CD8-positive, alpha-beta T cell (primary cell): ENCODE measurements at regions of chr2 and their contacts with region 1.

Region 1: GRCh38 chr2:27890146-27890923 is at the starts of genes BABAM2 and RBKS:
- DNase-seq: peak; percentile 86 to 97 (median 93)
- ATAC-seq: peak; percentile 79
- H3K4me3 ChIP-seq: peak within 1 kb of the TSS; percentile 77 to 95
- H3K4me3 Mint-ChIP-seq: peak within 1 kb of the TSS; percentile 94
- H3K27ac ChIP-seq: peak within 1 kb of the TSS; percentile 98 to 100
- H3K27ac Mint-ChIP-seq: peak within 1 kb of the TSS; percentile 100
- H3K4me1 ChIP-seq: peaks cover 22% of the 10 kb centered on the region
- H3K4me1 Mint-ChIP-seq: peaks cover 58% of the 10 kb centered on the region
- H3K27me3 ChIP-seq: no peaks in the 10 kb centered on the region
- H3K27me3 Mint-ChIP-seq: peaks cover 2% of the 10 kb centered on the region
- CTCF ChIP-seq: no peak
- total RNA-seq, gene BABAM2: 26.3 to 33.1 TPM
- total RNA-seq, gene RBKS: 5.9 to 6.3 TPM

Region 2: GRCh38 chr2:27281855-27282559 is 608.3 kb before region 1 on chr2 and contains the start of gene TRIM54:
- CTCF ChIA-PET with region 1: no interaction called
- POLR2A ChIA-PET with region 1: no interaction called
- intact Hi-C with region 1: no loop called
- DNase-seq: no peak
- ATAC-seq: no peak
- H3K4me3 ChIP-seq: no peak within 1 kb of the TSS
- H3K4me3 Mint-ChIP-seq: no peak within 1 kb of the TSS
- H3K27ac ChIP-seq: no peak within 1 kb of the TSS
- H3K27ac Mint-ChIP-seq: no peak within 1 kb of the TSS
- H3K4me1 ChIP-seq: no peaks in the 10 kb centered on the region
- H3K4me1 Mint-ChIP-seq: no peaks in the 10 kb centered on the region
- H3K27me3 ChIP-seq: no peaks in the 10 kb centered on the region
- H3K27me3 Mint-ChIP-seq: peaks cover 25% of the 10 kb centered on the region
- CTCF ChIP-seq: no peak
- total RNA-seq, gene TRIM54: not detected

Region 3: DNA sequence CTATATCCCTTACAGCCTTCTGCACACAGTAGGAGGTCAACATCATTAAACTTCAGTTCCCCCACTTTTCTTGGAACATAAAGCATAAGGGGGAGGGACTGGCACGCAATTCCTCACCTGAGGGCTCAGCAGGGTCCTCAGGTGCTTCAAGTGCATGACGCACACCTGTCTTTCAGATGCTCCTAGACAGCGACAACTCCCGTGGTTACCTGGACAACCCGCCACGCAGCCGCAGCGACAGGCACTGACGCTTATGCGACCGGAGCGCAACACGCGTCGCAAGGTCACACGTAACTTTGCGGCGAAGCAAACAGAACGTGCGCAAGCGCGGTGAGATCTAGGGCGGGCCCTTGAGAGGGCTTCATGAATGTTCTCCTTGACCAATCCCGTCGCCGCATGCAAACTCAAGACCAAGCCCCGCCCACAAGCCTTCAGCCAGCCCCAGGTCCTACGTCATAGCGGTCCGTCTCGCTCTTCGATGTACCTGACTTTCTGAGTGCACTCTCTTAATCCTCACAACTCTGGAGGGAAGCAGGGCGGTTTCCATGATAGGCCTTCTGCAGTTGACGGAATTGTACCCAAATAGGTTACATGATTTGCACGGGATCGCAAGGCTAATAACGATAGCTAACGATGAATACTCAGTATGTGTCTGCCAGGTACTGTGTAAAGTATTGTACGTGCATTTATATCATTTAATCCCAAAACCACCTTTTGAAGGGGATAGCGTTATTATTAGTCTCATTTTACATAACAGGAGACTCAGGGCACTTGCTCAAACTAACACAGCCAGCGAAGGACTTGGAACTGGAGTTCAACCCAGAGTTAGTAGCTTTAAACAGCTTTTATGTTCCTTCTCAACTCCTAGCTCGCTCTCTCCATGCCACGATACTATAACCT is 400.6 kb before region 1 on chr2 and contains the start of gene IFT172:
- CTCF ChIA-PET with region 1: no interaction called
- POLR2A ChIA-PET with region 1: no interaction called
- intact Hi-C with region 1: loop called in 1 of 2 experiments (anchors 5 kb)
- DNase-seq: peak; percentile 98 to 100 (median 99)
- ATAC-seq: peak; percentile 91
- H3K4me3 ChIP-seq: peak within 1 kb of the TSS; percentile 53 to 57
- H3K4me3 Mint-ChIP-seq: peak within 1 kb of the TSS; percentile 82
- H3K27ac ChIP-seq: peak within 1 kb of the TSS; percentile 85 to 90
- H3K27ac Mint-ChIP-seq: peak within 1 kb of the TSS; percentile 94
- H3K4me1 ChIP-seq: peaks cover 20% of the 10 kb centered on the region
- H3K4me1 Mint-ChIP-seq: peaks cover 21% of the 10 kb centered on the region
- H3K27me3 ChIP-seq: peaks cover 7 to 10% of the 10 kb centered on the region in 2 experiments
- H3K27me3 Mint-ChIP-seq: peaks cover 13% of the 10 kb centered on the region
- CTCF ChIP-seq: no peak
- total RNA-seq, gene IFT172: 15.0 to 17.2 TPM

Region 4: DNA sequence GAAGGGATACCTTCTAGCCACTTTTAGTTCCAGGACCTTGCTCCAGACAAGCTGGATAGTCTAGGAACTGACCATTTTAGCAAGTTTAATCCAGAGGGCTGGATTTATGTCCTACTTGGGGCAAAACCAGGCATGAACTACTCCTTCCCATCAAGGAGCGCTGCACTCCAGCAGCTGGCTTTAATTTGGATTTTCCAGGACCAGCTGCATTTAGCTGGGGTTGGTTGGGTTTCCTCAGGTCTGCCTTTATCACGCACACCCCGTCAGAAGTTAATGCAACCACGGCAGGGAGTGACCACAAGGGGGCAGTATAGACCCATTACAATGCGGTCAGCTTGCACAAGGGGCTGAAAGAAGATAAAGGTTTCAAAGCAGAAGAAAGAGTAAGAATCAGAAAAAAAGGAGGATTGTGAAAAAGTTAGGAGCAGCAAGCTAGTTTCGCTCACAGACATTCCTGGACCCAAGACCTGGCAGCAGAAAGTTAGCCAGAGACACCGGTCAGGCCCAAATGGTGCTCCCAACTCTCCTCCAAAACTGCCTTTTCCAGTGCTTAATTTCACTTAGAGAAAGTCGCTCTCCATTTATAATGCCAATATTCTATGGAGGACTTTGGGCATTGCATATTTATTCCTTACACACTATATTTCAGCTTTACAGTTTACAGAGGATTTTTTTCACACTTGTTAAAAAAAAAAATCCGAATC is 186.5 kb before region 1 on chr2:
- CTCF ChIA-PET with region 1: interaction called, 3 read pairs
- POLR2A ChIA-PET with region 1: interaction called, 3 read pairs
- intact Hi-C with region 1: loop called in 1 of 2 experiments (anchors 10 kb)
- DNase-seq: peak; percentile 73 to 90 (median 84)
- ATAC-seq: peak; percentile 84
- H3K4me3 ChIP-seq: no peak overlapping the region
- H3K4me3 Mint-ChIP-seq: no peak overlapping the region
- H3K27ac ChIP-seq: no peak overlapping the region
- H3K27ac Mint-ChIP-seq: no peak overlapping the region
- H3K4me1 ChIP-seq: no peaks in the 10 kb centered on the region
- H3K4me1 Mint-ChIP-seq: peaks cover 3% of the 10 kb centered on the region
- H3K27me3 ChIP-seq: no peaks in the 10 kb centered on the region
- H3K27me3 Mint-ChIP-seq: no peaks in the 10 kb centered on the region
- CTCF ChIP-seq: peak; percentile 84

Region 5: DNA sequence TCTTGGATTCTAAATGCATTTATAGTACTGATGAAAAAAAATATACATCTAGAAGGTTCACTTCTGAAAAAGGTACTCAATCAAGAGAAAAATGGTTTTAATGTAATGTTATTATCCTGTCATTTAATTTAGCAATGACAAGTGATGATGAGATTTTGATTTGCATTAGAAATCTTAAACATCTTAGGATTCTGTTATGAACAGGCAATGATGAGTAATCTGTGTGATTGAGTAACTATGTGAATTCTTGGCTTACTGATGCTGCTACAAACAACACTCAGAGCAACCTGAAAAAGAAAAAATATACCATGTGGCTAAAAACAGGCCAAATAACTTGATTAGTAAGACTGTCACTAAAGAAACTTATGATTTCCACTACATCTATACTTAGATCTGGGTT is 30.2 kb before region 1 on chr2:
- CTCF ChIA-PET with region 1: no interaction called
- POLR2A ChIA-PET with region 1: no interaction called
- intact Hi-C with region 1: no loop called
- DNase-seq: no peak
- ATAC-seq: no peak
- H3K4me3 ChIP-seq: no peak overlapping the region
- H3K4me3 Mint-ChIP-seq: no peak overlapping the region
- H3K27ac ChIP-seq: no peak overlapping the region
- H3K27ac Mint-ChIP-seq: no peak overlapping the region
- H3K4me1 ChIP-seq: no peaks in the 10 kb centered on the region
- H3K4me1 Mint-ChIP-seq: no peaks in the 10 kb centered on the region
- H3K27me3 ChIP-seq: no peaks in the 10 kb centered on the region
- H3K27me3 Mint-ChIP-seq: peaks cover under 1% of the 10 kb centered on the region
- CTCF ChIP-seq: no peak

Region 6: GRCh38 chr2:27960237-27960912 is 70.0 kb after region 1 on chr2:
- CTCF ChIA-PET with region 1: no interaction called
- POLR2A ChIA-PET with region 1: interaction called, 3 read pairs
- intact Hi-C with region 1: loop called in 1 of 2 experiments (anchors 5 kb)
- DNase-seq: peak in 3 of 9 experiments; percentile 22 to 59 (median 31)
- ATAC-seq: peak; percentile 85
- H3K4me3 ChIP-seq: no peak overlapping the region
- H3K4me3 Mint-ChIP-seq: peak overlapping the region; percentile 37
- H3K27ac ChIP-seq: no peak overlapping the region
- H3K27ac Mint-ChIP-seq: peak overlapping the region; percentile 33
- H3K4me1 ChIP-seq: peaks cover 27% of the 10 kb centered on the region
- H3K4me1 Mint-ChIP-seq: peaks cover 57% of the 10 kb centered on the region
- H3K27me3 ChIP-seq: no peaks in the 10 kb centered on the region
- H3K27me3 Mint-ChIP-seq: no peaks in the 10 kb centered on the region
- CTCF ChIP-seq: no peak

Region 7: GRCh38 chr2:28406276-28407096 is 516.2 kb after region 1 on chr2:
- CTCF ChIA-PET with region 1: no interaction called
- POLR2A ChIA-PET with region 1: no interaction called
- intact Hi-C with region 1: loop called (anchors 1 to 5 kb)
- DNase-seq: peak; percentile 47 to 93 (median 76)
- ATAC-seq: peak; percentile 60
- H3K4me3 ChIP-seq: no peak overlapping the region
- H3K4me3 Mint-ChIP-seq: peak overlapping the region; percentile 44
- H3K27ac ChIP-seq: peak overlapping the region; percentile 28 to 96
- H3K27ac Mint-ChIP-seq: peak overlapping the region; percentile 91
- H3K4me1 ChIP-seq: peaks cover 75% of the 10 kb centered on the region
- H3K4me1 Mint-ChIP-seq: peaks cover 76% of the 10 kb centered on the region
- H3K27me3 ChIP-seq: no peaks in the 10 kb centered on the region
- H3K27me3 Mint-ChIP-seq: no peaks in the 10 kb centered on the region
- CTCF ChIP-seq: no peak

Region 8: DNA sequence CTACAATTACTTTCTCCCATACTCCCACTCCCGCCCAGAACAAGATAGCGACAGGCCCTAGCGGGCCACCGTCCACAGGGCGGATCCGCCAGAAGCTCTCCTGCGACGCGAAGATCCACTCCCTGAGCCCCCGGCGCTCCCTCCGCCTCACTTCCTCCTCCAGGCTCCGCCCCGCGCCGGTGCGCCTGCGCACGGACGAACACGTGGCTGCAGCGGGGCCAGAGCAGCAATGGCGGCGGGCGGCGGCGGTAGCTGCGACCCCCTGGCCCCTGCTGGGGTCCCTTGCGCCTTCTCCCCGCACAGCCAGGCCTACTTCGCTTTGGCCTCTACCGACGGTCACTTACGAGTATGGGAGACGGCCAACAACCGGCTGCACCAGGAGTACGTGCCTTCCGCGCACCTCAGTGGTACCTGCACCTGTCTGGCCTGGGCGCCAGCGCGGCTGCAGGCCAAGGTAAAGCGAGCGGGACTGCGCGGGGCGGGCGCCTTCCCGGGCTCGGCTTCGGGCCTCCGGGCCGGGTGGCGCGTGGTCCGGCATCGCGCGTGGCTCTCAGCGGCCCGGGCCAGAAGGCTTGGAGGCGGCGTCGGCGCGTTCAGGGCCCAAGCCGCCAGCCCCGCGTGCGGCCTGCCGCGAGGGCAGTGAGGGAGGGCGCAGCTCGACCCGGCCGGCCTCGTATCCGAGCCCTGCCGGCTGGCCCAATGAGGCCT is 1004.3 kb after region 1 on chr2 and contains the start of gene WDR43:
- CTCF ChIA-PET with region 1: interaction called, 3 read pairs
- POLR2A ChIA-PET with region 1: no interaction called
- intact Hi-C with region 1: loop called in 1 of 2 experiments (anchors 10 kb)
- DNase-seq: peak; percentile 94 to 99 (median 98)
- ATAC-seq: peak; percentile 98
- H3K4me3 ChIP-seq: peak within 1 kb of the TSS; percentile 81 to 89
- H3K4me3 Mint-ChIP-seq: peak within 1 kb of the TSS; percentile 96
- H3K27ac ChIP-seq: peak within 1 kb of the TSS; percentile 68 to 81
- H3K27ac Mint-ChIP-seq: peak within 1 kb of the TSS; percentile 92
- H3K4me1 ChIP-seq: peaks cover 37% of the 10 kb centered on the region
- H3K4me1 Mint-ChIP-seq: peaks cover 44% of the 10 kb centered on the region
- H3K27me3 ChIP-seq: no peaks in the 10 kb centered on the region
- H3K27me3 Mint-ChIP-seq: no peaks in the 10 kb centered on the region
- CTCF ChIP-seq: no peak
- total RNA-seq, gene WDR43: 89.2 to 90.0 TPM